ENCODE measurements at regions of chr17 and their contacts with region 1.

Region 1: GRCh38 chr17:4540224-4540641 is 15.0 kb downstream of the MYBBP1A start:
- DNase-seq: no peak

Region 2: DNA sequence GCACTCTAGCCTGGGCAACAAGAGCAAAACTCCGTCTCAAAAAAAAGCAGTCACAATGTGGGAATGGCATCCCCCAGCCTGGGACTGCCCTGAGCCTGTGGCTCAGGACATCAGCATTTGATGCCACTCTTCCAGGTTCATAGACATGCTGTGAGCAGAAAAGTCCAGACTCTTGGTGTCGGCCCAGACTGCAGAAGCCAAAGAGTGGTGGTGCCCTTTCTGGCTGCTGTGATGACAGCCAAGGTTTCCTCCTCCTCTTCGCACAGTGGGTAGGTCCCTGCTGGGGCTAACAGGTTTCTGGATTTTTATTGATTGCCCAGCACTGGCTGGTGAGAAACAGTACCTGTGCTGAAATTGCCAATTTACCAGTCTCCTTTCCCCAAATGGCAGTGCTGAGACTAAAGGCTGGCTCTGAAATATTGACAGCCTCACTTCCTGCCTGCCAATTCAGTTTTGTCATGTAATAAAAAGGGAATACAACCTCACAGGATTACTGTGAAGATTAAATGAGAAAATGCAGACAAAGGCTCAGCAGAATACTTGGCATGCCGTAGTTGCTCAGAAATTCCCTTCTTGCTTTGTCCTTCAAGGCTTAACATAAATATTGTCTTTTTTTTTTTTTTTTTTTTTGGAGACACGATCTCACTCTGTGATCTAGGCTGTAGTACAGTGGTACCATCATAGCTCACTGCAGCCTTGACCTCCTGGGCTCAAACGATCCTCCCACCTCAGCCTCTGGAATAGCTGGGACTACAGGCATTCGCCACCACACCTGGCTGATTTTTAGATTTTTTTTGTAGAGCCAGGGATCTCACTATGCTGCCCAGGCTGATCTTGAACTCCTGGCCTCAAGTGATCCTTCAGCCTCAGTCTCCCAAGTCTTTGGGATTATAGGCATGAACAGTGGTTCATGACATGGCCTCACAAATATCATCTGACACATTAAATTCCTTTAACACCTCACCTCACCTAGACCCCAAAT is 158.3 kb before region 1 on chr17:
- intact Hi-C with region 1: no loop called
- DNase-seq: no peak

Region 3: GRCh38 chr17:4499431-4500187 is 40.6 kb before region 1 on chr17:
- intact Hi-C with region 1: loop called (anchors 5 kb)
- DNase-seq: no peak

Measured in cardiac septum (tissue), 1 donor.